Ascending aorta (tissue), 2 donors: ENCODE measurements at regions of chrX and their contacts with region 1.

Region 1: GRCh38 chrX:75522565-75523431 is at the start of gene ZDHHC15:
- DNase-seq: peak in 1 of 2 donors; percentile 81
- H3K4me3 ChIP-seq: peak within 1 kb of the TSS; percentile 50 to 76
- H3K27ac ChIP-seq: peak within 1 kb of the TSS; percentile 76 to 89
- H3K4me1 ChIP-seq: no peaks in the 10 kb centered on the region
- H3K27me3 ChIP-seq: no peaks in the 10 kb centered on the region
- CTCF ChIP-seq: peak in 1 of 3 experiments; percentile 7
- total RNA-seq, gene ZDHHC15: 6.4 TPM

Region 2: DNA sequence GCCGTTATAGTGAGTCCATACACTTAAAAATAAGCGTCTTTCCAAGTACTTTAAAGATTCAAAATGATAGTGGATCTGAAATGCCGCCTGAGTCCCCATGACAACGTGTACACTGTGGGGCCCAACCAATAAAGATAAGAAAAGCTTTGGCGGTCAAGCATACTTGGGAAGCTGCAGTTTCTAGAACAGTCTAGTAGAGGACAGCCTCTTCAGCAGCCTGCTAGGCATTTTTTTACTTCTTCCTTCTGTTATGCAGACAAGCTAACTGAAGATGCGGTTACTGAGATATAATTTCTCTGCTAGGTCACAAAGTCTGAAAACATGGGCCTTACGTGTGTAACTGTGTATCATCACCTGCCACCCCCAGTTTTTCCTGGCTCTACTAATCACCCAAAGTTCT is 249.3 kb before region 1 on chrX:
- intact Hi-C with region 1: loop called (anchors 5 kb)
- DNase-seq: no peak
- H3K4me3 ChIP-seq: peak overlapping the region; percentile 64 to 78
- H3K27ac ChIP-seq: peak overlapping the region; percentile 86 to 97
- H3K4me1 ChIP-seq: no peaks in the 10 kb centered on the region
- H3K27me3 ChIP-seq: no peaks in the 10 kb centered on the region
- CTCF ChIP-seq: no peak

Region 3: GRCh38 chrX:75596178-75596577 is 73.4 kb after region 1 on chrX:
- intact Hi-C with region 1: loop called (anchors 5 kb)
- DNase-seq: no peak
- H3K4me3 ChIP-seq: no peak overlapping the region
- H3K27ac ChIP-seq: peak overlapping the region in 1 of 2 donors; percentile 40
- H3K4me1 ChIP-seq: no peaks in the 10 kb centered on the region
- H3K27me3 ChIP-seq: no peaks in the 10 kb centered on the region
- CTCF ChIP-seq: no peak

Region 4: GRCh38 chrX:75623535-75623934 is 100.7 kb after region 1 on chrX:
- intact Hi-C with region 1: no loop called
- DNase-seq: no peak
- H3K4me3 ChIP-seq: no peak overlapping the region
- H3K27ac ChIP-seq: no peak overlapping the region
- H3K4me1 ChIP-seq: no peaks in the 10 kb centered on the region
- H3K27me3 ChIP-seq: no peaks in the 10 kb centered on the region
- CTCF ChIP-seq: peak in 1 of 3 experiments; percentile 14